ENCODE measurements at regions of chrX and their contacts with region 1.

Region 1: DNA sequence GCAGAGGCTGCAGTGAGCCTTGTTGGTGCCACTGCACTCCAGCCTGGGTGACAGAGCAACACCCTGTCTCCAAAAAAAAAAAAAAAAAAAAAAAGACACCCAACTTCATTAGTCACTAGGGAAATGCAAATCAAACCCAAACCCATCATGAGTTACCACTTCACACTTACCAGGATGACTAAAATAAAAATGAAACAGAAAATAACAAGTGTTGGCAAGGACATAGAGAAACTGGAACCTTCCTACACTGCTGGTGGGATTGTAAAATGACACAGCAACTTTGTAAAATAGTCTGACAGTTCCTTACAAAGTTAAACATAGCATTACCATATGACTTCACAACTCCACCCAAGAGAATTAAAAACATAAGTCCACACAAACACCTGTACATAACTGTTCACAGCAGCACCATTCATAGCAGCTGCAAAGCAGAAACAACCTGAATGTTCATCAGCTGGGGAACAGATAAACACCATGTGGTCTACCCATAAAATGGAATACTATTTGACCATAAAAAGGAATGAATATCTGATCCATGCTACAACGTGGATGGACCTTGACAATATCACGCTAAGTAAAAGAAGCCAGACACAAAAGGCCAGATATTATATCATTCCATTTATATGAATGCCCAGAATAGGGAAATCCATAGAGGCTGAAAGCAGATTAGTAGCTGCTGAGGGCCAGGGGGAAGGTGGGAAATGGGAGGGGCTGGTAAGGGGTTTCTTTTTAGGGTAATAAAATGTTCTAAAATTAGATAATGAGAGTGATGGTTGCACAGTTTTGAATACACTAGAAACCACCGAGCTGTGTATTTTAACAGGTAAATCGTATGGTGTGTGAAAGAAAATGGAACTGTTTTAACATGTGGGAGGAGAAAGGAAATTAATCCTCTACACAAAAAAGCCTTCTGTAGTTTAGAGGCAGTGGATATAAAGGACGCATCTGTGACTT is 18.3 kb downstream of the CD99L2 start:
- DNase-seq: no peak
- H3K4me3 Mint-ChIP-seq: peak overlapping the region; percentile 34
- H3K27ac Mint-ChIP-seq: peak overlapping the region; percentile 72
- H3K4me1 Mint-ChIP-seq: peaks cover 18% of the 10 kb centered on the region
- H3K27me3 Mint-ChIP-seq: no peaks in the 10 kb centered on the region

Region 2: GRCh38 chrX:150018931-150019361 is 861.2 kb before region 1 on chrX:
- intact Hi-C with region 1: no loop called
- DNase-seq: no peak
- H3K4me3 Mint-ChIP-seq: no peak overlapping the region
- H3K27ac Mint-ChIP-seq: no peak overlapping the region
- H3K4me1 Mint-ChIP-seq: no peaks in the 10 kb centered on the region
- H3K27me3 Mint-ChIP-seq: no peaks in the 10 kb centered on the region

Region 3: DNA sequence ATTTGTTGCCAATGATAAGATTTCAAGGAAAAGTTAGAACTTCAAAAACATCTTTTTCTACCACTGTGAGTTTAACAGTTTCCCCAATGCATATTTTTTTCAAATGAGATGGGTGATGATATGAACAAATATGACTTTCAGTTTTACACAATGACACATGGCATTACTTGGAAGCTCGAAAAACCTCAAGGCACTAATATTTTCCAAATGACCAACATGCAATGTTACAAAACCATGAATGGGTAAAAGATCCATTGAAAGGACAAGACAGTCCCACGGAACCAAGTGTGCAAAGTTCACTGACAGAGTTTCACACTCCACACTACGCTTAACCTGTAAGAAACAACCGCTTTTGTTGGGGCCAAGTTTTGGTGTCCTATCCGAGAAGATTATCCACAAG is 66.2 kb before region 1 on chrX:
- intact Hi-C with region 1: loop called (anchors 10 kb)
- DNase-seq: no peak
- H3K4me3 Mint-ChIP-seq: no peak overlapping the region
- H3K27ac Mint-ChIP-seq: no peak overlapping the region
- H3K4me1 Mint-ChIP-seq: no peaks in the 10 kb centered on the region
- H3K27me3 Mint-ChIP-seq: no peaks in the 10 kb centered on the region

Region 4: DNA sequence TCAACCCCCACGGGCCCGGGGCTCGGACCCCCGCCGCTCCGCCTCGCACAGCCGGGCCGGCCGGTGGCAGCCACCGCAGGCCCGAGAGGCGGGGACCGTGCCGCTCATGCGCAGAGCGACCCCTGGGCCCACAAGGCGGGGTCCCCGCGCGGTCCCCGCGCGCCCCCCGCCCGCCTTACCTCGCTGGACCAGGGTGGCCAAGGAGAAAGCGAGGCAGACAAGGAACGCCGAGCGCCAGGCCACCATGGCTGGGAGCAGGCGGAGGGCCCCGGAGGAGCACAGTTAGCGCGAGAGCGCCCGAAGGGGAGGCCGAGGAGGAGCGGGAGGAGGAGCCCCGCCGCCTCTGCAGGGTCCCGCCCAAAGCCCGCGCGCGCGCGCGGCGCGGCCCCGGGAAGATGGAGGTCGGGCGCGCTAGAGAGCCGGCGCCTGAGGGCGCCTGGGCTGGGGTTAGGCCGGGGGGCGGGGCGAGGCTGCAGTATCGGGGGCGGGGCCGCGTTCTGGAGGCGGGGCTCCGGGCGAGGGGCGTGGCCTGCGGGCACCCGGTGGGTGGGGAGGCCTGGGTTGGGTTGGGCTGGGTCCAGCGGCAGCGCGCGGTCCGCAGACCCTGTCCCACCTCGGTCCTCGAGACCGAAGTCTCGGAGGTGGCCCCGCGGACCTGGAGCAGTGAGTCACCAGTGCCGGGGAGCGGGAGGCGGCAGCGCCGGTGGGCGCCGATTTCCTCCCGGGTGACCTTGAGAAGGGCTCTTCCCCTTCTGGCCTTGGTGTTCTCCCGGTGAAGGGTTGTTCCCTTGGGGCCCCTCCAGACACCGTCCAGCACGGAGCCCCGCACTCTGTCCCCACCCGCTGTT is 18.4 kb after region 1 on chrX and contains the start of gene CD99L2:
- intact Hi-C with region 1: loop called (anchors 1 kb)
- DNase-seq: peak; percentile 96
- H3K4me3 Mint-ChIP-seq: peak within 1 kb of the TSS; percentile 91
- H3K27ac Mint-ChIP-seq: peak within 1 kb of the TSS; percentile 69
- H3K4me1 Mint-ChIP-seq: peaks cover 5% of the 10 kb centered on the region
- H3K27me3 Mint-ChIP-seq: peaks cover 13% of the 10 kb centered on the region
- total RNA-seq, gene CD99L2: 8.1 and 10.9 TPM in 2 replicates